HAP-1 (cell line): ENCODE measurements at regions of chr5 and their contacts with region 1.

Region 1: DNA sequence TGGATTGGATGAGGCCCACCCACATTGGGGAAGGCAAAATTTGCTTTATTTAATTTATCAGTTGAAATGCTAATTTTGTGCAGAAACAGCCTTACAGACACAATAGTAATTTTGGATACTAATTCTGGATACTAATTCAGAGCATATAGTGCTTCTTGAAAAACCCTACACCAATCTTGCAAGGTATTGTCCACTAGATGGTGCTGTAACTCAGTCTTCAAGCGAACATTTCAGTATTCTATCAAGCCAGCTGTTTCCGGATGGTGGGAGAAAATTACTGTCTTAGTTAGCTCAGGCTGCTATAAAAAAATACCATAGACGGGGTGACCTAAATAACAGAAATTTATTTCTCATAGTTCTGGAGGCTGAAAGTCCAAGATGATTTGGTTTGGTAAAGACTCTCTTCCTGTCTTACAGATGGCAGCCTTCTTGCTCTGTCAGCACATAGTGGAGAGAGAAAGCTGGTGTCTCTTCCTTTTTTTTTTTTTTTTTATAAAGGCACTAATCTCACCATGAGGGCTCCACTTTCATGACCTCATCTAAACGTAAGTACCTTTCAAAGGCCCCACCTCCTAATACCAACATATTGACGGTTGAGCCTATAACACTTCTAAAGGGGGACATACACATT is 1306.5 kb upstream of the CDH9 start:
- DNase-seq: peak; percentile 31 to 38
- H3K4me3 ChIP-seq: no peak overlapping the region
- H3K4me1 ChIP-seq: no peaks in the 10 kb centered on the region
- H3K27me3 ChIP-seq: no peaks in the 10 kb centered on the region

Region 2: GRCh38 chr5:28743182-28744110 is 398.5 kb after region 1 on chr5:
- in situ Hi-C with region 1: loop called (anchors 25 kb)
- DNase-seq: no peak
- H3K4me3 ChIP-seq: no peak overlapping the region
- H3K4me1 ChIP-seq: no peaks in the 10 kb centered on the region
- H3K27me3 ChIP-seq: no peaks in the 10 kb centered on the region